CD4-positive, alpha-beta T cell (primary cell): ENCODE measurements at regions of chr16 and their contacts with region 1.

Region 1: GRCh38 chr16:70523076-70523742 is at the start of gene COG4:
- DNase-seq: peak; percentile 83 to 96 (median 89)
- ATAC-seq: peak; percentile 76
- H3K4me3 ChIP-seq: peak within 1 kb of the TSS; percentile 96
- H3K4me3 Mint-ChIP-seq: peak within 1 kb of the TSS; percentile 95
- H3K27ac ChIP-seq: peak within 1 kb of the TSS; percentile 94 to 96
- H3K27ac Mint-ChIP-seq: peak within 1 kb of the TSS; percentile 97
- H3K4me1 ChIP-seq: peaks cover 56% of the 10 kb centered on the region
- H3K4me1 Mint-ChIP-seq: peaks cover 59% of the 10 kb centered on the region
- H3K27me3 ChIP-seq: no peaks in the 10 kb centered on the region
- H3K27me3 Mint-ChIP-seq: no peaks in the 10 kb centered on the region
- CTCF ChIP-seq: no peak
- total RNA-seq, gene COG4: 15.9 to 19.3 TPM

Region 2: DNA sequence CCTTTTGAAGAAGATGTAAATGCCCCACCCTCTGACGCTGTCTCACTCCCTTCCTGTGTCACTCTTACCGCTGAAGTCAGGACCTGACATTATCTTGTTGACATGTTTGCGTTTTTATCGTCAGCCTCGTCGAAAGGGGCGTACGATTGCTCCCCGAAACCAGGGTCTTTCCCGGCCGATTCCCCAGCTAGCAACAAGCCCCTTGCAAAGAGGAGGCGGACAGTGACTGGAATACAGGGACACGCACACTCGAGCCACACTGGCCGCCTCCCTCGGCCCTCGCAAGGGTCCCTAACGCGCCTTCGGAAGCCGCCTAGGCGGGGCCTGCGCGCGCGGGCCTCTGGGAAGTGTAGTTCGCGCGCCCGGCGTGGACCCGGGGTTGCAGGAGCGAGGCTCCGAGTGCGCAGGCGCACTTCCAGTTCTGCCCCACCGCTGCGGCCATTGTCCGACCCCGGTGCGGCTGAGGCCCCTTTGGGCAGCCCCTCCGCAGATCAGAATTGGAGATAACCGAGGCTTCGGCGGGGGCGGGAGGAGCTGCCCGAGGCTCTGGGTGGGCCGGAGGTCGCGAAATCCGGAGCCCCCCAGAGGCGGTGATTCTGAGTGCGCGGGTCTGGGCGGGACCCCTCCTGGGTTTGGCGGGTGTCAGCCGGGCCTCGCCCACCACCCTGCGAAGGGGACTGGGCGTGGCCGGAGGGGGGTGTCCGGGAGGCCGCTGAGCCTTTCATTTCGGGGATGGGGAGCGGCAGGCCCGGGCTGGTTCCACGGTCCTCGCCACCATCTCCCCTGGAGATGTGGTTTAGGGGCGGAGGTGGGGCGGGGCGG is 1984.1 kb before region 1 on chr16 and contains the start of gene ZFP90:
- CTCF ChIA-PET with region 1: no interaction called
- POLR2A ChIA-PET with region 1: no interaction called
- intact Hi-C with region 1: loop called in 1 of 2 experiments (anchors 10 kb)
- DNase-seq: peak; percentile 69 to 93 (median 80)
- ATAC-seq: peak; percentile 86
- H3K4me3 ChIP-seq: peak within 1 kb of the TSS; percentile 79
- H3K4me3 Mint-ChIP-seq: peak within 1 kb of the TSS; percentile 97
- H3K27ac ChIP-seq: peak within 1 kb of the TSS; percentile 80 to 94
- H3K27ac Mint-ChIP-seq: peak within 1 kb of the TSS; percentile 100
- H3K4me1 ChIP-seq: peaks cover 21% of the 10 kb centered on the region
- H3K4me1 Mint-ChIP-seq: peaks cover 30% of the 10 kb centered on the region
- H3K27me3 ChIP-seq: no peaks in the 10 kb centered on the region
- H3K27me3 Mint-ChIP-seq: no peaks in the 10 kb centered on the region
- CTCF ChIP-seq: no peak
- total RNA-seq, gene ZFP90: 23.3 to 24.3 TPM

Region 3: GRCh38 chr16:70251629-70252354 is 271.4 kb before region 1 on chr16 and contains the start of gene EXOSC6:
- CTCF ChIA-PET with region 1: interaction called, 3 read pairs
- POLR2A ChIA-PET with region 1: interaction called, 7 read pairs
- intact Hi-C with region 1: loop called in 1 of 2 experiments (anchors 5 kb)
- DNase-seq: peak; percentile 86 to 97 (median 90)
- ATAC-seq: peak; percentile 95
- H3K4me3 ChIP-seq: peak within 1 kb of the TSS; percentile 54
- H3K4me3 Mint-ChIP-seq: peak within 1 kb of the TSS; percentile 98
- H3K27ac ChIP-seq: peak within 1 kb of the TSS in 1 of 2 donors; percentile 75
- H3K27ac Mint-ChIP-seq: peak within 1 kb of the TSS; percentile 97
- H3K4me1 ChIP-seq: peaks cover 27% of the 10 kb centered on the region
- H3K4me1 Mint-ChIP-seq: peaks cover 21% of the 10 kb centered on the region
- H3K27me3 ChIP-seq: no peaks in the 10 kb centered on the region
- H3K27me3 Mint-ChIP-seq: no peaks in the 10 kb centered on the region
- CTCF ChIP-seq: peak; percentile 93
- total RNA-seq, gene EXOSC6: 27.8 to 28.2 TPM

Region 4: DNA sequence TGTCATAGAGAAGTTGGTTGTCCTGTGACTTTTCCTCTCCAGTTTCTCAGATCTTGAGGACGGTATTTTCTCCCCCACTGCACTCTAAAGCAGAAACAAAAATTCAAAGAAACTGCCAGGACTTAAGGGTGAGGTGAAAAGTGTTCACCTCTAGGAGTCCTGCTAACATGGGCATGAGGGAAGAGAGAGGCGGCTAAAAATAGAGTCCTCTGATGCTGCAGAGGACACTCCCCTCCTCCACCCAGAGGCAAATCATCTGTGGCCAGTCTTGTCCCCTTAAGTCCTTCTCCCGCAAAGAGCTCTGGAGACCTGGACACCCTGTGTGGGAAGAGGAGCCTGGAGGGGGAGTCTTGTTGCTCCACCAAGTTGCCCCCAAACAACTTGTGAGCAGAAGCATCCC is 181.2 kb before region 1 on chr16:
- CTCF ChIA-PET with region 1: no interaction called
- POLR2A ChIA-PET with region 1: interaction called, 27 read pairs
- intact Hi-C with region 1: loop called (anchors 1 to 10 kb)
- DNase-seq: no peak
- ATAC-seq: no peak
- H3K4me3 ChIP-seq: no peak overlapping the region
- H3K4me3 Mint-ChIP-seq: no peak overlapping the region
- H3K27ac ChIP-seq: no peak overlapping the region
- H3K27ac Mint-ChIP-seq: no peak overlapping the region
- H3K4me1 ChIP-seq: peaks cover 13% of the 10 kb centered on the region
- H3K4me1 Mint-ChIP-seq: peaks cover 13% of the 10 kb centered on the region
- H3K27me3 ChIP-seq: no peaks in the 10 kb centered on the region
- H3K27me3 Mint-ChIP-seq: no peaks in the 10 kb centered on the region
- CTCF ChIP-seq: no peak

Region 5: DNA sequence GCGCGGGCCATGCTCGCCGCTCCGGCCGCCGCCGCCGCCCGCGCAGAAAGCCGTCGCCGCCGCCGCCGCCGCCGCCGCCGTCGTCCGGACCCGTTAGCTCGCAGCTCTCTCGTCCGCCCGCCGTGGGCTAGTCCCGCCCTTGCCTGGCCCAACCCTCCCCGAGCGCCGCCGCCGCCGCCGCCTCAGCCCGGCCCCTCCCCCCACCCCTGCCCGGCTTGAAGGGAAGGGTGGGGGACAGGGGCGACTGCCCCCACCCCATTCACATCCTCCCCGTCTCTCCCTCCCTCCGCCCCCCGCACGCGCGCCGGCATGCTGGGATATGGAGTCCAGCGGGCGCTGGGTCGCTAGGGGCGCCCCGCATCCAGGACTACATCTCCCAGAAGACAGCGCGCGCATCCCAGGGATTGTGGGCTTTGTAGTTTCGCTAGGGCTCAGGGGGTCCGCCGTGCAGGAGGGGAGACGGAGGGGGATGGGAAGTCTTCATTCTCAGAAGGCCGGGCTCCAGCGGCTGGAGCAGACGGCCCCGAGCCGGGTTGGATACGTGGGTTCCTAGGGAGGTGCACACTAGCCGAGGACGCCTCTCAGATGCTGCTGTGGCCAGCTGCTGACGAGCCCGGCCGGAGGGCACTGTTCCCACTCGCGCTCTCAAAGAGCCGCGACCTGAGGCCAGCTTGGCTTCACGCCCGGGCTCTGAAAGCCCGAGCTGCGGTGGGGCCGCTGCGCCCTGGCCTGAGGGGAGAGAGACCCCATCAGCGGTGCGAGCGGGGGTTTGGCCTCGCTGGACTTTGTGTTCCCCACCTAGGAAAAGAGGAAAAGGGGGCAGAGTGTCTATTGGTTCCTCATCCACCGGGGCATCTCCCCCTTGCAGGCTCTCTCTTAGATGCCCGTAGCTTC is 84.0 kb before region 1 on chr16 and contains the start of gene ST3GAL2:
- CTCF ChIA-PET with region 1: no interaction called
- POLR2A ChIA-PET with region 1: no interaction called
- intact Hi-C with region 1: loop called in 1 of 2 experiments (anchors 5 kb)
- DNase-seq: peak; percentile 87 to 96 (median 94)
- ATAC-seq: peak; percentile 97
- H3K4me3 ChIP-seq: peak within 1 kb of the TSS; percentile 94
- H3K4me3 Mint-ChIP-seq: peak within 1 kb of the TSS; percentile 92
- H3K27ac ChIP-seq: peak within 1 kb of the TSS in 1 of 2 donors; percentile 33
- H3K27ac Mint-ChIP-seq: peak within 1 kb of the TSS; percentile 82
- H3K4me1 ChIP-seq: peaks cover 33% of the 10 kb centered on the region
- H3K4me1 Mint-ChIP-seq: peaks cover 45% of the 10 kb centered on the region
- H3K27me3 ChIP-seq: no peaks in the 10 kb centered on the region
- H3K27me3 Mint-ChIP-seq: no peaks in the 10 kb centered on the region
- CTCF ChIP-seq: no peak
- total RNA-seq, gene ST3GAL2: 9.8 to 11.1 TPM

Region 6: GRCh38 chr16:71461686-71462648 is 938.8 kb after region 1 on chr16 and contains the start of gene ZNF23:
- CTCF ChIA-PET with region 1: no interaction called
- POLR2A ChIA-PET with region 1: no interaction called
- intact Hi-C with region 1: loop called in 1 of 2 experiments (anchors 10 kb)
- DNase-seq: peak; percentile 53 to 87 (median 72)
- ATAC-seq: peak; percentile 95
- H3K4me3 ChIP-seq: peak within 1 kb of the TSS; percentile 96
- H3K4me3 Mint-ChIP-seq: peak within 1 kb of the TSS; percentile 94
- H3K27ac ChIP-seq: peak within 1 kb of the TSS; percentile 68 to 79
- H3K27ac Mint-ChIP-seq: peak within 1 kb of the TSS; percentile 85
- H3K4me1 ChIP-seq: peaks cover 11% of the 10 kb centered on the region
- H3K4me1 Mint-ChIP-seq: peaks cover 34% of the 10 kb centered on the region
- H3K27me3 ChIP-seq: no peaks in the 10 kb centered on the region
- H3K27me3 Mint-ChIP-seq: no peaks in the 10 kb centered on the region
- CTCF ChIP-seq: peak; percentile 54
- total RNA-seq, gene ZNF23: 7.0 to 8.4 TPM